ENCODE measurements at regions of chr18 and their contacts with region 1.

Region 1: GRCh38 chr18:55589625-55590291 is 1.8 kb upstream of the TCF4 start:
- DNase-seq: peak; percentile 43 to 91 (median 72)
- ATAC-seq: peak; percentile 91
- H3K4me3 ChIP-seq: peak overlapping the region; percentile 46 to 54
- H3K4me3 Mint-ChIP-seq: peak overlapping the region; percentile 90
- H3K27ac ChIP-seq: peak overlapping the region in 1 of 2 experiments; percentile 64
- H3K27ac Mint-ChIP-seq: peak overlapping the region; percentile 74
- H3K4me1 ChIP-seq: peaks cover 7% of the 10 kb centered on the region
- H3K4me1 Mint-ChIP-seq: peaks cover 26% of the 10 kb centered on the region
- H3K27me3 ChIP-seq: peaks cover 5 to 7% of the 10 kb centered on the region in 2 experiments
- H3K27me3 Mint-ChIP-seq: peaks cover 40% of the 10 kb centered on the region
- CTCF ChIP-seq: no peak

Region 2: GRCh38 chr18:55573386-55573785 is 16.4 kb before region 1 on chr18:
- CTCF ChIA-PET with region 1: no interaction called
- POLR2A ChIA-PET with region 1: no interaction called
- intact Hi-C with region 1: no loop called
- DNase-seq: no peak
- ATAC-seq: no peak
- H3K4me3 ChIP-seq: no peak overlapping the region
- H3K4me3 Mint-ChIP-seq: no peak overlapping the region
- H3K27ac ChIP-seq: no peak overlapping the region
- H3K27ac Mint-ChIP-seq: no peak overlapping the region
- H3K4me1 ChIP-seq: no peaks in the 10 kb centered on the region
- H3K4me1 Mint-ChIP-seq: no peaks in the 10 kb centered on the region
- H3K27me3 ChIP-seq: no peaks in the 10 kb centered on the region
- H3K27me3 Mint-ChIP-seq: no peaks in the 10 kb centered on the region
- CTCF ChIP-seq: no peak

Region 3: GRCh38 chr18:56065086-56065485 is 475.3 kb after region 1 on chr18:
- CTCF ChIA-PET with region 1: no interaction called
- POLR2A ChIA-PET with region 1: no interaction called
- intact Hi-C with region 1: no loop called
- DNase-seq: no peak
- ATAC-seq: no peak
- H3K4me3 ChIP-seq: no peak overlapping the region
- H3K4me3 Mint-ChIP-seq: no peak overlapping the region
- H3K27ac ChIP-seq: no peak overlapping the region
- H3K27ac Mint-ChIP-seq: no peak overlapping the region
- H3K4me1 ChIP-seq: no peaks in the 10 kb centered on the region
- H3K4me1 Mint-ChIP-seq: no peaks in the 10 kb centered on the region
- H3K27me3 ChIP-seq: no peaks in the 10 kb centered on the region
- H3K27me3 Mint-ChIP-seq: no peaks in the 10 kb centered on the region
- CTCF ChIP-seq: no peak

Region 4: DNA sequence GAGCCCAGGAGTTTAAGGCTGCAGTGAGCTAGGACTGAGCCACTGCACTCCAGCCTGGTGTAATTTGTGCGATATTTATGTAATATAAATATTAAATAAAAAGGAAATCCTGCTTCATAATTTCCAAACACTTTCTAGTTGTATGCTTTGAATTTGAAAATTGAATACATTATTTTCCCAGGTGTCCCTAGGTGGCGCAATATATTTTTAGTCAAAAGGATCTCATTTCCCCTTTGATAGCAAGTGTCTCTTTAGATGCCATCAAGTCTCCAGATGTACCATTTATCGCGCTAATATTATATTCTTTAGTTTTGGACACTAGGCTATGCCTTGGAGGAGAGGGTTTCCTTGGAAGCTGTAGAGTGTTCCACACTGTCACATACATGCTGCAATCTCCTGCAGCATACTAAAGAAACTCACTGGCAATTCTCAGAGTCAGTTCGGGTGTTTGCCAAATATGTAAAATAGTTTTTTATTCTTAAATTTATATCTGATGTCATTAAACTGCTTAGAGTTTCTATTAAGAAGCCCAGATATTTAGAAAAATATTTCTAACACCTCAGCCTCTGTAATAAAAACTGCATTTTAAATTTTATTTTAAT is 1055.8 kb after region 1 on chr18:
- CTCF ChIA-PET with region 1: no interaction called
- POLR2A ChIA-PET with region 1: no interaction called
- intact Hi-C with region 1: loop called in 1 of 2 experiments (anchors 10 kb)
- DNase-seq: peak in 2 of 9 experiments; percentile 44 to 56
- ATAC-seq: no peak
- H3K4me3 ChIP-seq: no peak overlapping the region
- H3K4me3 Mint-ChIP-seq: no peak overlapping the region
- H3K27ac ChIP-seq: no peak overlapping the region
- H3K27ac Mint-ChIP-seq: no peak overlapping the region
- H3K4me1 ChIP-seq: peaks cover 5% of the 10 kb centered on the region
- H3K4me1 Mint-ChIP-seq: peaks cover 5% of the 10 kb centered on the region
- H3K27me3 ChIP-seq: no peaks in the 10 kb centered on the region
- H3K27me3 Mint-ChIP-seq: no peaks in the 10 kb centered on the region
- CTCF ChIP-seq: peak; percentile 52

Measured in CD8-positive, alpha-beta T cell (primary cell).